ENCODE measurements at regions of chr2 and their contacts with region 1.

Region 1: DNA sequence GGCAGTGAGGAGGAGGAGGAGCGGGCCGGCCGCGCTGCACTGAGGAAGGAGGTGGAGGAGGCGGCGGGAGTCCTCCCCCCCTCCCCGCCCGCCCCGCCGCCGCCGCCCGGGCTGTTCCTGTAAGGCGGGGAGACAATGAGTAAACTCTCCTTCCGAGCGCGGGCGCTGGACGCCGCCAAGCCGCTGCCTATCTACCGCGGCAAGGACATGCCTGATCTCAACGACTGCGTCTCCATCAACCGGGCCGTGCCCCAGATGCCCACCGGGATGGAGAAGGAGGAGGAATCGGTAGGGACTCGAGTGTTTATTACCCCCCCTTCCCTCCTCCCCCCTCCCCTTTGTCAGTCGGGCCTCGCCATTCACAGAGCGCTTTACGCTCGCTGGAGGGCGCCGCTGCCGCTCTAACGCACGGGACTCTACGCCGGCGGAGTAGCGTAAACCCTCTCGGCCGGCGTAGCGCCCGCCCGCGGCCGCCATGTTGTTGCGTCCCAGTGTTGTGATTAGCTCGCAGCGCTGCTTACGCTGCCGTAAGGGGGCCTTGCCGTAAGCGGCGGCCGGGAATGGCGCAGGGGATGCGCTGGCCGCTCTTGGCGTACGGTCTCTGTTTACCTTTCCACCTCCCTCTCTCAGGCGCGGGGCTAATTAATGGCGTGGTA is 460 bp downstream of the EPC2 start:
- DNase-seq: peak; percentile 95
- H3K4me3 ChIP-seq: peak overlapping the region; percentile 90
- H3K27ac ChIP-seq: peak overlapping the region; percentile 66
- H3K4me1 ChIP-seq: peaks cover 13% of the 10 kb centered on the region
- CTCF ChIP-seq: 0 out of 2 replicates have a peak, but pooled peaks have one; percentile 25

Region 2: DNA sequence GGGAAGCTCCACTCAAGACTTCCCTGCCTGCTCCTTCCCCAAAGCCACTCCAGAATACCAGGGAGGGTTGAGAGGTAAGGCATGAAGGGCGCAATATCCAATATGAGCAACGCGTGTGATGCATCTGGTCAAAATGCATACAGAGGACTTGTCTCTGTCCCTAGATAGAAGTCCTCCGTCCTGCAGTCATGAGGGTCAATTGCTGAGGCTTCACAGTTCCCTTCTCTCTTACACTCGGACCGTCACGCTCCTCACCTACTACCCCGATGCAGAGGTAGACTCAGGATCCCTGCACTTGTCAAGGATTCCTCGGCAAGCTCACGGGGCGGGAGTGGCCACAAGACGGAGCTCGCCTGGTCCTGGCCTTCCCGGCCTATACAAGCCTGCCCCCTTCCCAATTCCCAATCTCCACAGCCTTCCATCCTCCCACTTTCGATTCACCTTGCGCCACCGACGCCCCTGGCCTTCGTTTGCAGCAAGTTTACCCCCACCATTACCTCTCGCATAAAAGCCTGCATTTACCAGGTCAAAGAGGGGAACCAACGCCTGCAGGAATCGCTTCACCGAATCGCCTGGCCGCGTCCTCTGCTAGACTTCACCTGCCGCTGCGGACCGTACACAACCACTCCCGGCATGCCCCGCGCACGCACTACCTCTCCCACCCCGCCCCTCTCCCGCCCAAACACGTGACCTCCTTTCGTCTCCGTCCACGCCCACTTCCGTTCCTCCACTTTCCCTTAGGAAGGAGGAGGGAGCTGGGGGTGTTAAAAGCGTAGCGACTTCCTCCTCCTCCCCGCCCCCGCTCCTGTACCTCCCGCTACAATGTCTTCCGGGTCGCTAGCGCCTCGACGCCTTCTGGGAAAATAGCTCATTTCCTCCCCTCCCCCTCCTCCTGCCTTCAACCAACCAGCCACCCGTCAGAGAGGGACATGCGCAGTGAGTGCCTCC is 624.6 kb before region 1 on chr2 and contains the start of gene ORC4:
- CTCF ChIA-PET with region 1: no interaction called
- POLR2A ChIA-PET with region 1: interaction called, 3 read pairs
- intact Hi-C with region 1: loop called (anchors 1 kb)
- DNase-seq: peak; percentile 99
- H3K4me3 ChIP-seq: peak within 1 kb of the TSS; percentile 91
- H3K27ac ChIP-seq: peak within 1 kb of the TSS; percentile 84
- H3K4me1 ChIP-seq: peaks cover 35% of the 10 kb centered on the region
- CTCF ChIP-seq: 0 out of 2 replicates have a peak, but pooled peaks have one; percentile 36
- total RNA-seq, gene ORC4: 20.3 and 21.0 TPM in 2 replicates

Region 3: DNA sequence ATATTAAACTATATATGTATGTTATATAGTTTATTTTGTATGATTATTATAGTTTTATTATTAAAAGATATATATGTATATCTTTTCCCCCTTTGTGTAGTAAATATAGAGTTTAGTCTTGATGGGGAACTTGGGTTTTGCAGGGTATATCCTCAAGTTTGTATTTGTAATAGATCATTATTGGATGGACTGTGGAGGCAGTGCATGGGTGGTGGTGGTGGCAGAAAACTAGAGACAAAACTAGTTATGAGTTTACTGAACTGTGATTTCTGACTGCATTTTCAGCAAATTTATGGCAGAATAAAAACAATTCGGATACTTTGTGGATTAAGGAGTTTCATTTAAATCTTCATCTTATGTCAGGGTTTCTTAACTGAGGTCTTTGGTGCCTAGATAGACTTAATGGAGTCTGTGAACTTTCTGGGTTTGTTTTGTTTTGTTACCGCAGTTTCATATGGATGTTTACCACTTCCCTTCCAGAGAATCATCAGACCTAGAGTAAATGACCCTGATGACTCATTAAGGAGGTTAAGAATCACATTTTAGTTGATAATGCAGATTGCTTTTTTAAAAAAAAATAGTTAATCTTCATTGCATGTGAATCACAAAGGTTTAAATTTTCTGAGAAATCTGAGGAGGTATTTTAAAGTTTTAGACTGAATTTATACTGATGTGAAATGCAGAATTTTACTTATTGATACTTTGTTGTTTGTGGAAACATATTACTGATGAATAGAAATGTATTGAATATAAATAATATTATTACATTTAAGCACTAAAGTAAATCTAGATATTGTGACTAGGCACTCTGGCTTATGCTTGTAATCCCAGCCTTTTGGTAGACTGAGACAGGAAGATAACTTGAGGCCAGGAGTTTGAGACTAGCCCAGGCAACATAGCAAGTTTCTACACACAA is 14.1 kb after region 1 on chr2:
- CTCF ChIA-PET with region 1: interaction called, 3 read pairs
- POLR2A ChIA-PET with region 1: interaction called, 18 read pairs
- intact Hi-C with region 1: no loop called
- DNase-seq: no peak
- H3K4me3 ChIP-seq: no peak overlapping the region
- H3K27ac ChIP-seq: no peak overlapping the region
- H3K4me1 ChIP-seq: peaks cover 4% of the 10 kb centered on the region
- CTCF ChIP-seq: no peak

Region 4: GRCh38 chr2:148874868-148875341 is 229.9 kb after region 1 on chr2 and contains the start of gene KIF5C:
- CTCF ChIA-PET with region 1: no interaction called
- POLR2A ChIA-PET with region 1: interaction called, 5 read pairs
- intact Hi-C with region 1: loop called (anchors 1 kb)
- DNase-seq: peak; percentile 95
- H3K4me3 ChIP-seq: peak within 1 kb of the TSS; percentile 74
- H3K27ac ChIP-seq: no peak within 1 kb of the TSS
- H3K4me1 ChIP-seq: peaks cover 18% of the 10 kb centered on the region
- CTCF ChIP-seq: no peak
- total RNA-seq, gene KIF5C: 8.1 and 15.2 TPM in 2 replicates

Region 5: DNA sequence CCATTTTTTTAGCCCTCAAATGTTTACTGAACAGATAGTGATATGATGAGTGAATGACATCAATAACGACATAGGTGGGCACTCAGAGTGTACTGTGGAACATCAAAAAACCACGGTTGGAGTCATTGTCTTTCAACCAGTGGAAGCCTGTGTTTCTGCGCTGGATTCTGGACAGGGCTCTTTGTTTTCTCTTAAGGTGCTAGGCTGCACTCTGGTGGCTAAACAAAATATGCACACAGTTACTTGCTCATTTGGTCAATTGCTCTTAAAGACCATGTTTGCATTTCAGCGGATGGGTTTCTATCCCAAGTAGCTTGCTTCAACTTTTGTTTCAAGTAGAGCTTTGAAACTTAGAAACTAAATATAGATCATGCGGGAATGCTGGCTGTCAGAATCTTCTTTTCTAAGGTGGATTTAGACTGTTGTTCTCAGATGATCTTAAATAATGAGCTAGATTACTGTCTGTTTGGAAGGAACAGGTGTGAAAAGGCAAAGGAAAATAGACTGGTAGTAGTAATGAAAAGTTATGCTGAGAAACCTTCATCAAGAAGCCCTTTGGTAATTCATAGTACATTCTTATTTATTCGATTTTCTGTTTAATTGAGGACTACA is 345.0 kb after region 1 on chr2:
- CTCF ChIA-PET with region 1: no interaction called
- POLR2A ChIA-PET with region 1: no interaction called
- intact Hi-C with region 1: loop called (anchors 10 kb)
- DNase-seq: peak; percentile 68
- H3K4me3 ChIP-seq: no peak overlapping the region
- H3K27ac ChIP-seq: no peak overlapping the region
- H3K4me1 ChIP-seq: no peaks in the 10 kb centered on the region
- CTCF ChIP-seq: peak; percentile 85

Region 6: DNA sequence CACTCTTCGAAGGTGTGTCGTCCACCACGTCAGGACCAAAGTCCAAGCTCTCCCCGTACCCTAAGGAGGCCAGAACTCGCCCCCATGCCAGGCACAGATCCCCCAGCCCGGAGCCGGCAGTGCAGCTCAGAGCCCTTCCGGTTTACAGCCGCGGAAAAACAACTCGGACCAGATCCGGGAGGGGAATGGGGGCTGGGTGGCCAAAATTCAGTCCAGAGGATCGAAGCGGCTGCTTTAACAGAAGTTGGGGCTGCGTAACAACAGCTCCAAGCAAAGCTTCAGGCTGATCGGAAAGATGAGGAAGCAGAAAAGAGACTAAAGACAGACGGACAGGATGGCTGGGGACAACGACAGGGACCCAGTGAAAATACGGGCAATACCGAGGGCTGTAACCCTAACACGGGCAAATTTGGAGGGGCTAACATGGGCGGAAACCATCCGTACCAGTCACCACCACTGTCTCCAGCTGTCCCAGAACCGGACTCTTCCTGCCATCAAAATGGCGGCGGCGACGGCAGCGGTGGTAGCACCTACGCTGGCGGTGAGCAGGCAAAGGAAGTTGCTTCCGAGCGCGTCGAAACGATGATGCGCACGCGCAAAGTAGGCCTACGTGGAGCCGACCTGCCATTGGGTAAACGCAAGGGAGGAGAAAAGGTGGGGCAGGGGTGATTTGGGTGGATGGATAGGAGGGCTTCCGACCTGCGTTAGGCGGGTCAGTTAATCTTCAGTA is 942.4 kb after region 1 on chr2 and contains the start of gene MMADHC:
- CTCF ChIA-PET with region 1: no interaction called
- POLR2A ChIA-PET with region 1: no interaction called
- intact Hi-C with region 1: loop called (anchors 10 kb)
- DNase-seq: peak; percentile 97
- H3K4me3 ChIP-seq: peak within 1 kb of the TSS; percentile 94
- H3K27ac ChIP-seq: peak within 1 kb of the TSS; percentile 88
- H3K4me1 ChIP-seq: peaks cover 20% of the 10 kb centered on the region
- CTCF ChIP-seq: no peak
- total RNA-seq, gene MMADHC: 68.5 and 73.6 TPM in 2 replicates

Measured in OCI-LY7 (cell line).